ENCODE measurements at regions of chr1 and their contacts with region 1.

Region 1: GRCh38 chr1:25819576-25820246 is at the start of gene MTFR1L:
- DNase-seq: peak; percentile 81 to 92
- H3K4me3 ChIP-seq: peak within 1 kb of the TSS; percentile 77 to 93
- H3K27ac ChIP-seq: peak within 1 kb of the TSS; percentile 83 to 92
- H3K4me1 ChIP-seq: peaks cover 0 to 33% (median 27%) of the 10 kb centered on the region in 4 donors
- H3K27me3 ChIP-seq: no peaks in the 10 kb centered on the region
- CTCF ChIP-seq: no peak

Region 2: GRCh38 chr1:25543425-25544242 is 276.1 kb before region 1 on chr1 and contains the start of gene LDLRAP1:
- intact Hi-C with region 1: no loop called
- DNase-seq: peak; percentile 62 to 87
- H3K4me3 ChIP-seq: peak within 1 kb of the TSS; percentile 79 to 99
- H3K27ac ChIP-seq: peak within 1 kb of the TSS; percentile 87 to 93
- H3K4me1 ChIP-seq: peaks cover 0 to 48% (median 30%) of the 10 kb centered on the region in 4 donors
- H3K27me3 ChIP-seq: no peaks in the 10 kb centered on the region
- CTCF ChIP-seq: no peak

Region 3: GRCh38 chr1:25658791-25659431 is 160.8 kb before region 1 on chr1:
- intact Hi-C with region 1: no loop called
- DNase-seq: peak in 1 of 2 donors; percentile 70
- H3K4me3 ChIP-seq: no peak overlapping the region
- H3K27ac ChIP-seq: peak overlapping the region in 1 of 2 donors; percentile 10
- H3K4me1 ChIP-seq: peaks cover 0 to 18% (median 8%) of the 10 kb centered on the region in 4 donors
- H3K27me3 ChIP-seq: no peaks in the 10 kb centered on the region
- CTCF ChIP-seq: no peak

Region 4: DNA sequence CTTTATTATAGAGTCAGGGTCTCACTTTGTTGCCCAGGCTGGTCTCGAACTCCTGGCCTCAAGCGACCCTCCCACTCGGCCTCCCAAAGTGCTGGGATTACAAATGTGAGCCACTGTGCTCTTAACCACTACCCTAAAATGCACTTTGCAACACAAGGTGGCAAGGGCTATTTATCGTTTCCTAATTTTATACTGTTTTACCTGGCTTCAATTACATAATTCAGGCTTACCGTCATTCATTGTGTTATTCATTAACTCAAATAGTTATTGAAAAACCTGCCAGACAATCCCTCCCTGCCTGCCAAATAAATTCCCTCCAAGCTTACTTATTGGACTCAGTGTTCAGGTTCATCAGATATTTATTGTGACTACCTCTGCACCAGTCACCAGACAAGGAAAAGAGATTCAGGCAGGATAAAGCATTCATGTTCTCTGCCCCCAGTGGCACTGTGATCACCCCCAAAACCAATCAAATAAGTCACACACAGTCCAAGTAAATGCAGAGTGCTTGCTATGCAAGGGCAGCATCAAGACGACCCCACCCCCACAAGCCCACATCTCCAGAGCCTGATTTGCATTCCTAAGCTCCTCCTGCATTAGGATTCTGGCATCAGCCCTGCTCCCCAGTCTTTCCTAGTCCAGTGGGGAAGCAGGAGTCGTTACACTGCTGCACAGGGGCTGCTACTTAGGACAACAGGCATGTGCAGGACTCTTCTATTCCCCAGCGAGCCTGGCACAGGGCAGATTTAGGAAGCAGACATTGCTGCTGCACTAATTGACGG is 47.7 kb after region 1 on chr1:
- intact Hi-C with region 1: loop called (anchors 5 kb)
- DNase-seq: peak in 1 of 2 donors; percentile 42
- H3K4me3 ChIP-seq: no peak overlapping the region
- H3K27ac ChIP-seq: no peak overlapping the region
- H3K4me1 ChIP-seq: peaks cover 0 to 10% (median 0%) of the 10 kb centered on the region in 4 donors
- H3K27me3 ChIP-seq: no peaks in the 10 kb centered on the region
- CTCF ChIP-seq: no peak

Measured in tibial artery (tissue), 4 donors.